ENCODE measurements at regions of chr14 and their contacts with region 1.

Region 1: DNA sequence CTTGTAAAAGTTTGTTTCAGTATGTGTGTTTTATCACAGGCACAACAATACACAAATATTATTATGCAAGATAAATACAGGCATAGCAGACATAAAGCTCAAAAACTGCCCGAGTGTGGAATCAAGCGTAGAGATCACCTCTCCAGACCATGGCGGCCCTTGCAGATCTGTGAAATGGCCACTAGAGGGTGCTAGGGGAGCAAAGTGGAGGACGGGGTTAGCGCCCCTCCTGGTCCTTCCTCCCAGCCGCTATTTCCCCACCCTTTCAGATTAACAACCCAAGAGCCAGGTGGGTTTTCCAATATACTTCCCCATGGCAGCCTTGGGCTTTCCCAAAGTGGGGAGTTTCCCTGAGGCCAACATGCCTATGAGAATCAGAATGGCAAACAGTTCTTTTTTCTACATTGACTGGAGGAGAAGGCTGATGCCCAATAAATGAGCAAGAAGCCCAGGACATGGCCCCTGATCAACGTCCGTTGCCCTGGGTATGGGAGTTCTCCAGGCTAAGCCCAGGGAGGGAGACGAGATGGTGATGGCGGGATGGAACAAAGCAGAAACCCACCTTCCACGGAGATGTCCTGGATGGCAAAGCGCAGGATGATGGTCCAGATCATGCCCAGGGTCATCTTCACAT is 67.4 kb downstream of the ACTN1 start:
- DNase-seq: no peak
- ATAC-seq: peak; percentile 100
- H3K4me3 ChIP-seq: no peak overlapping the region
- H3K27ac ChIP-seq: no peak overlapping the region
- H3K4me1 ChIP-seq: no peaks in the 10 kb centered on the region
- H3K27me3 ChIP-seq: no peaks in the 10 kb centered on the region
- CTCF ChIP-seq: peak; percentile 96 to 99 (median 97)
- EP300 ChIP-seq: no peak
- POLR2A ChIP-seq: no peak
- RAD21 ChIP-seq: peak; percentile 78

Region 2: GRCh38 chr14:68862954-68863594 is 48.6 kb before region 1 on chr14:
- CTCF ChIA-PET with region 1: interaction called, 27 read pairs
- POLR2A ChIA-PET with region 1: no interaction called
- RAD21 ChIA-PET with region 1: interaction called, 3 read pairs
- SMC1A ChIA-PET with region 1: interaction called, 8 read pairs
- in situ Hi-C with region 1: no loop called
- intact Hi-C with region 1: loop called (anchors 1 kb)
- DNase-seq: peak; percentile 32
- ATAC-seq: peak; percentile 90
- H3K4me3 ChIP-seq: no peak overlapping the region
- H3K27ac ChIP-seq: no peak overlapping the region
- H3K4me1 ChIP-seq: no peaks in the 10 kb centered on the region; the same call in 1 of the 2 replicates
- H3K27me3 ChIP-seq: no peaks in the 10 kb centered on the region
- CTCF ChIP-seq: peak; percentile 69 to 78 (median 75)
- EP300 ChIP-seq: no peak
- POLR2A ChIP-seq: no peak
- RAD21 ChIP-seq: peak; percentile 80

Region 3: GRCh38 chr14:68891851-68892660 is 19.7 kb before region 1 on chr14:
- CTCF ChIA-PET with region 1: interaction called, 11 read pairs
- POLR2A ChIA-PET with region 1: no interaction called
- RAD21 ChIA-PET with region 1: no interaction called
- SMC1A ChIA-PET with region 1: no interaction called
- in situ Hi-C with region 1: no loop called
- intact Hi-C with region 1: no loop called
- DNase-seq: no peak
- ATAC-seq: no peak
- H3K4me3 ChIP-seq: no peak overlapping the region
- H3K27ac ChIP-seq: no peak overlapping the region
- H3K4me1 ChIP-seq: no peaks in the 10 kb centered on the region
- H3K27me3 ChIP-seq: no peaks in the 10 kb centered on the region
- CTCF ChIP-seq: no peak
- EP300 ChIP-seq: no peak
- POLR2A ChIP-seq: no peak
- RAD21 ChIP-seq: no peak

Region 4: DNA sequence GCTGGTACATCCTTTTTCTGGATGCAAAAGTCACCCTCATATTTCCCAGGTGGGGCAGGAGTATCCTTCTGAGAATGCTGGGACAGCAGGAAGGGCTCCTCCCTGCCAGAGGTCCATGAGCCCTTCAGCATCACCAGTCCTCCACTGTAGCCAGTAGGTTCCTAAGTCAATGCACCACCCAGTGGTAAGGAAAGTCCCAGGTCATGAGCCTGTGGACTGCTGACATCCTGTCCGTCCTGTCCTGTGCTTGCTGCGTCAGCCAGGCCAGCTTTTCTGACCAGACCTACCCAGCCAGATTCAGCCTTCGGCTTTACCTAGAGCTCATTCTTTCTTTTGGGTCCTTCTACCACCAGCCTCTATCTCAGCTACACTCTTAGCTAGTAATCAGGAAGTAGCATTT is 90.4 kb after region 1 on chr14:
- CTCF ChIA-PET with region 1: interaction called, 13 read pairs
- POLR2A ChIA-PET with region 1: no interaction called
- RAD21 ChIA-PET with region 1: interaction called, 8 read pairs
- SMC1A ChIA-PET with region 1: interaction called, 6 read pairs
- in situ Hi-C with region 1: no loop called
- intact Hi-C with region 1: no loop called
- DNase-seq: no peak
- ATAC-seq: peak; percentile 91
- H3K4me3 ChIP-seq: no peak overlapping the region
- H3K27ac ChIP-seq: no peak overlapping the region
- H3K4me1 ChIP-seq: no peaks in the 10 kb centered on the region
- H3K27me3 ChIP-seq: no peaks in the 10 kb centered on the region; a peak in 2 of 4 replicates
- CTCF ChIP-seq: peak in 1 of 3 experiments; percentile 21; a peak in 2 of 6 replicates
- EP300 ChIP-seq: no peak
- POLR2A ChIP-seq: no peak
- RAD21 ChIP-seq: no peak

Region 5: DNA sequence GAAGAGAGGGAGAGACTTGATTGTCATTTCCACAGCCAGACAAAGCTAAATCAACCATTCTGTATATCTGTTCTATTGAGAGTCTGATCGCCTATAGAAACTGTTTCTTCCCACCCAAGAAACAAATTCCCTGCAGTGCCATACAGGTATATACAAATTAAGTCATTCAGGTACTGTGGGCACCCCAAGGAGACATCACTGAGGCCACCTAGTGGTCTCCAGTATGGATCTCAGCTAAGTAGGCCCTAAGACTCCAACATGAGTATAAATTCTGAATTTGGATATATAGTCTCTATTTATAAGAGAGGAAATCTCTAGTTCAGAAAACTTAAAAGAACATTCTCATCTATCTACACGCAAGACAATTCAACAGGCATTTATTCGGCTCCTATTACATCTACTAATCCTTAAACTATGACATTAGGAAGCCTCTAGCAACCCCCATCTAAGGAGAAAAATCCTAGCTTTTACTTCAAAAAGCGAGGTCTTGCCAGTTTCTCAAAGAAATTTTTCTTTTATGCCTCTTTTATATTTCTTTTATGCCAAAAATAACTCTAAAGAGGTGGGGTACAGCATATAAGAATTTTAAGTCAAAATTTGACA is 178.6 kb after region 1 on chr14:
- CTCF ChIA-PET with region 1: interaction called, 38 read pairs
- POLR2A ChIA-PET with region 1: no interaction called
- RAD21 ChIA-PET with region 1: interaction called, 3 read pairs
- SMC1A ChIA-PET with region 1: interaction called, 16 read pairs
- in situ Hi-C with region 1: loop called (anchors 5 kb)
- intact Hi-C with region 1: loop called (anchors 1 kb)
- DNase-seq: no peak
- ATAC-seq: peak; percentile 82
- H3K4me3 ChIP-seq: no peak overlapping the region
- H3K27ac ChIP-seq: no peak overlapping the region
- H3K4me1 ChIP-seq: peaks cover 4% of the 10 kb centered on the region
- H3K27me3 ChIP-seq: no peaks in the 10 kb centered on the region
- CTCF ChIP-seq: peak; percentile 50 to 65 (median 56)
- EP300 ChIP-seq: no peak
- POLR2A ChIP-seq: no peak
- RAD21 ChIP-seq: peak; percentile 58

Region 6: GRCh38 chr14:69101331-69101826 is 189.7 kb after region 1 on chr14:
- CTCF ChIA-PET with region 1: interaction called, 72 read pairs
- POLR2A ChIA-PET with region 1: no interaction called
- RAD21 ChIA-PET with region 1: interaction called, 4 read pairs
- SMC1A ChIA-PET with region 1: interaction called, 45 read pairs
- in situ Hi-C with region 1: loop called (anchors 5 kb)
- intact Hi-C with region 1: no loop called
- DNase-seq: no peak
- ATAC-seq: peak; percentile 84
- H3K4me3 ChIP-seq: no peak overlapping the region
- H3K27ac ChIP-seq: no peak overlapping the region
- H3K4me1 ChIP-seq: no peaks in the 10 kb centered on the region
- H3K27me3 ChIP-seq: no peaks in the 10 kb centered on the region
- CTCF ChIP-seq: peak; percentile 34 to 43 (median 37); a peak in 5 of 6 replicates
- EP300 ChIP-seq: no peak
- POLR2A ChIP-seq: no peak
- RAD21 ChIP-seq: peak; percentile 38

Region 7: GRCh38 chr14:69107407-69108003 is 195.8 kb after region 1 on chr14:
- CTCF ChIA-PET with region 1: interaction called, 72 read pairs
- POLR2A ChIA-PET with region 1: no interaction called
- RAD21 ChIA-PET with region 1: interaction called, 23 read pairs
- SMC1A ChIA-PET with region 1: interaction called, 45 read pairs
- in situ Hi-C with region 1: no loop called
- intact Hi-C with region 1: loop called (anchors 1 kb)
- DNase-seq: peak; percentile 20
- ATAC-seq: peak; percentile 84
- H3K4me3 ChIP-seq: no peak overlapping the region
- H3K27ac ChIP-seq: no peak overlapping the region
- H3K4me1 ChIP-seq: no peaks in the 10 kb centered on the region
- H3K27me3 ChIP-seq: no peaks in the 10 kb centered on the region
- CTCF ChIP-seq: peak; percentile 60 to 77 (median 68)
- EP300 ChIP-seq: no peak
- POLR2A ChIP-seq: no peak
- RAD21 ChIP-seq: peak; percentile 81

Region 8: DNA sequence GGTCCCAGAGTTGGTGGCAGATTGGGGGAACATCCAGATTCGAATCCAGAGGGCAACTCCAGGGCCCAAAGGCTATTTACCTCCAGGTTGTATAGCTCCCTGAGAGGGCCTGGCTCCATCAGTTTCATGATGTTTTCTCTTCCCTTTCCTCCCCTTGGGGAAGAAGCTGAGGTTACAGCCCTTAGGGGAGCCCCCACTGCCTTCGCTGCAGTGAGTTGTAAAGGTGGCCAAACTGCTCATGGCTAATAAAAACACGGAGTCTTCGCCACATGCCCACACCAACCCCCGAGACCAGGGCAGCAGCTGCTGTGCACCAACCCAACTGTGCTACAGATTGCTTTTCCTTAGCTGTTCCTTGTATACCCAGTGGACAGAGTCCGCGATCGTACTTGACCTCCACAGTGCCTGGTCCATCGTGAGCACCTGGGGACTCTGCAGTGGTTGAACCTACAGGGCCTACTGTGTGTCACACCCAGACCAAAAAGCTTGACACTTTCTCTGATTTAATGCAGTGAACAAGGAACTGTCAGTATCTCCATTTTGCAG is 369.1 kb after region 1 on chr14:
- CTCF ChIA-PET with region 1: no interaction called
- POLR2A ChIA-PET with region 1: no interaction called
- RAD21 ChIA-PET with region 1: no interaction called
- SMC1A ChIA-PET with region 1: no interaction called
- in situ Hi-C with region 1: no loop called
- intact Hi-C with region 1: no loop called
- DNase-seq: no peak
- ATAC-seq: no peak
- H3K4me3 ChIP-seq: no peak overlapping the region
- H3K27ac ChIP-seq: no peak overlapping the region
- H3K4me1 ChIP-seq: peaks cover 3% of the 10 kb centered on the region; the same call in 1 of the 2 replicates
- H3K27me3 ChIP-seq: no peaks in the 10 kb centered on the region
- CTCF ChIP-seq: no peak
- EP300 ChIP-seq: no peak
- POLR2A ChIP-seq: no peak
- RAD21 ChIP-seq: no peak

Measured in GM12878 (cell line).